PC-3 (cell line): ENCODE measurements at regions of chr7 and their contacts with region 1.

Region 1: GRCh38 chr7:95916573-95917297 is 144.4 kb downstream of the DYNC1I1 start:
- DNase-seq: peak; percentile 83
- ATAC-seq: peak; percentile 75
- H3K4me3 ChIP-seq: peak overlapping the region; percentile 44; the same call in 1 of the 2 replicates
- H3K27ac ChIP-seq: no peak overlapping the region
- H3K4me1 ChIP-seq: peaks cover 19% of the 10 kb centered on the region
- H3K27me3 ChIP-seq: no peaks in the 10 kb centered on the region
- CTCF ChIP-seq: peak; percentile 95

Region 2: GRCh38 chr7:95993380-95993779 is 76.6 kb after region 1 on chr7:
- CTCF ChIA-PET with region 1: no interaction called
- POLR2A ChIA-PET with region 1: no interaction called
- intact Hi-C with region 1: loop called (anchors 1 kb)
- DNase-seq: peak; percentile 8
- ATAC-seq: peak; percentile 77
- H3K4me3 ChIP-seq: no peak overlapping the region
- H3K27ac ChIP-seq: no peak overlapping the region
- H3K4me1 ChIP-seq: no peaks in the 10 kb centered on the region
- H3K27me3 ChIP-seq: no peaks in the 10 kb centered on the region
- CTCF ChIP-seq: peak; percentile 51

Region 3: GRCh38 chr7:96188174-96188581 is 271.4 kb after region 1 on chr7:
- CTCF ChIA-PET with region 1: no interaction called
- POLR2A ChIA-PET with region 1: no interaction called
- intact Hi-C with region 1: loop called (anchors 10 kb)
- DNase-seq: no peak
- ATAC-seq: no peak; the same call in 1 of the 2 replicates
- H3K4me3 ChIP-seq: no peak overlapping the region
- H3K27ac ChIP-seq: no peak overlapping the region
- H3K4me1 ChIP-seq: peaks cover 7% of the 10 kb centered on the region
- H3K27me3 ChIP-seq: no peaks in the 10 kb centered on the region
- CTCF ChIP-seq: no peak

Region 4: GRCh38 chr7:96949766-96950165 is 1033.0 kb after region 1 on chr7:
- CTCF ChIA-PET with region 1: no interaction called
- POLR2A ChIA-PET with region 1: no interaction called
- intact Hi-C with region 1: loop called (anchors 5 kb)
- DNase-seq: peak; percentile 93
- ATAC-seq: peak; percentile 92
- H3K4me3 ChIP-seq: peak overlapping the region; percentile 26; the same call in 1 of the 2 replicates
- H3K27ac ChIP-seq: peak overlapping the region; percentile 9; the same call in 1 of the 2 replicates
- H3K4me1 ChIP-seq: peaks cover 32% of the 10 kb centered on the region
- H3K27me3 ChIP-seq: no peaks in the 10 kb centered on the region
- CTCF ChIP-seq: no peak; the same call in 1 of the 2 replicates

Region 5: DNA sequence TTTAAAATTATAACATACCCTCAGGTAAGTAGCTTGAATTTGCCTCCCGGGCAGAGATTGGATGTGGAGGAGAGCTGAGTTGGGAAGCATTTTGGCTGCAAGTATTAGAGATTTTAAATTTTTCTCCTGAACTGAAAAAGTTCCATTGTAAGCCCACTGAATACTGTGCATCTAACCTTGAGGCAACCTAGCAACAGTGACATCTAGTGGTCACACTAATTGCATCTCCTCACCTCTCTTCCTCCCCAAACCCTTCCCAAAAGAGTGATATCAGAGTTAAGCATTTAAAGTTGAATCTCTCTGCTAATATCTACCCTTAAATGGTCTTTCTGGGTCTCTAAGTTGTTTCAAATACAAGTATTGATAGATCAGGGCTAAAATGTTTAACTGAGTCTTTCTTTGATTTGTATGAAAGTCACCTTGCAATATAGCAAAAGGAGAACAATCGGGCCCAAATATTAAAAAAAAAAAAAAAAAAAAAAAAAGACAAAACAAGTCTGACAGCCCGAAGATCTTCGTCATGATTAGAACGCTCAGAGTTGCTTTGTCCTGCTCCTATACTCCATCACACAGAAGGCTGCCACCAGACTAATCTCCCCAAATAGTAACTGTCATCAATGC is 1148.3 kb after region 1 on chr7:
- CTCF ChIA-PET with region 1: no interaction called
- POLR2A ChIA-PET with region 1: no interaction called
- intact Hi-C with region 1: loop called (anchors 1 kb)
- DNase-seq: peak; percentile 72
- ATAC-seq: peak; percentile 99
- H3K4me3 ChIP-seq: peak overlapping the region; percentile 61
- H3K27ac ChIP-seq: no peak overlapping the region
- H3K4me1 ChIP-seq: no peaks in the 10 kb centered on the region
- H3K27me3 ChIP-seq: no peaks in the 10 kb centered on the region
- CTCF ChIP-seq: peak; percentile 79

Region 6: GRCh38 chr7:97835296-97836138 is 1918.8 kb after region 1 on chr7:
- CTCF ChIA-PET with region 1: no interaction called
- POLR2A ChIA-PET with region 1: no interaction called
- intact Hi-C with region 1: loop called (anchors 10 kb)
- DNase-seq: peak; percentile 79
- ATAC-seq: peak; percentile 89
- H3K4me3 ChIP-seq: no peak overlapping the region
- H3K27ac ChIP-seq: no peak overlapping the region
- H3K4me1 ChIP-seq: no peaks in the 10 kb centered on the region
- H3K27me3 ChIP-seq: peaks cover 25% of the 10 kb centered on the region
- CTCF ChIP-seq: peak; percentile 84